Mammary epithelial cell (primary cell): ENCODE measurements at regions of chr20 and their contacts with region 1.

Region 1: GRCh38 chr20:17995967-17996819 is 27.4 kb downstream of the MGME1 start:
- DNase-seq: peak; percentile 55
- H3K4me3 ChIP-seq: no peak overlapping the region
- H3K27ac ChIP-seq: no peak overlapping the region
- H3K4me1 ChIP-seq: peaks cover 14% of the 10 kb centered on the region
- H3K27me3 ChIP-seq: no peaks in the 10 kb centered on the region
- CTCF ChIP-seq: peak; percentile 98 to 100

Region 2: GRCh38 chr20:16279320-16279719 is 1716.9 kb before region 1 on chr20:
- CTCF ChIA-PET with region 1: no interaction called
- dilution Hi-C with region 1: no loop called
- in situ Hi-C with region 1: no loop called
- intact Hi-C with region 1: no loop called
- DNase-seq: no peak
- H3K4me3 ChIP-seq: no peak overlapping the region
- H3K27ac ChIP-seq: no peak overlapping the region
- H3K4me1 ChIP-seq: no peaks in the 10 kb centered on the region
- H3K27me3 ChIP-seq: no peaks in the 10 kb centered on the region
- CTCF ChIP-seq: no peak

Region 3: GRCh38 chr20:17611540-17612286 is 384.5 kb before region 1 on chr20:
- CTCF ChIA-PET with region 1: no interaction called
- dilution Hi-C with region 1: no loop called
- in situ Hi-C with region 1: no loop called
- intact Hi-C with region 1: loop called (anchors 2 kb)
- DNase-seq: peak; percentile 70
- H3K4me3 ChIP-seq: no peak overlapping the region
- H3K27ac ChIP-seq: no peak overlapping the region
- H3K4me1 ChIP-seq: peaks cover 29% of the 10 kb centered on the region
- H3K27me3 ChIP-seq: no peaks in the 10 kb centered on the region
- CTCF ChIP-seq: peak in 1 of 2 donors; percentile 75

Region 4: GRCh38 chr20:17958373-17959256 is 37.6 kb before region 1 on chr20:
- CTCF ChIA-PET with region 1: interaction called, 9 read pairs
- dilution Hi-C with region 1: no loop called
- in situ Hi-C with region 1: no loop called
- intact Hi-C with region 1: loop called (anchors 2 kb)
- DNase-seq: no peak
- H3K4me3 ChIP-seq: no peak overlapping the region
- H3K27ac ChIP-seq: no peak overlapping the region
- H3K4me1 ChIP-seq: peaks cover 37% of the 10 kb centered on the region
- H3K27me3 ChIP-seq: no peaks in the 10 kb centered on the region
- CTCF ChIP-seq: no peak

Region 5: DNA sequence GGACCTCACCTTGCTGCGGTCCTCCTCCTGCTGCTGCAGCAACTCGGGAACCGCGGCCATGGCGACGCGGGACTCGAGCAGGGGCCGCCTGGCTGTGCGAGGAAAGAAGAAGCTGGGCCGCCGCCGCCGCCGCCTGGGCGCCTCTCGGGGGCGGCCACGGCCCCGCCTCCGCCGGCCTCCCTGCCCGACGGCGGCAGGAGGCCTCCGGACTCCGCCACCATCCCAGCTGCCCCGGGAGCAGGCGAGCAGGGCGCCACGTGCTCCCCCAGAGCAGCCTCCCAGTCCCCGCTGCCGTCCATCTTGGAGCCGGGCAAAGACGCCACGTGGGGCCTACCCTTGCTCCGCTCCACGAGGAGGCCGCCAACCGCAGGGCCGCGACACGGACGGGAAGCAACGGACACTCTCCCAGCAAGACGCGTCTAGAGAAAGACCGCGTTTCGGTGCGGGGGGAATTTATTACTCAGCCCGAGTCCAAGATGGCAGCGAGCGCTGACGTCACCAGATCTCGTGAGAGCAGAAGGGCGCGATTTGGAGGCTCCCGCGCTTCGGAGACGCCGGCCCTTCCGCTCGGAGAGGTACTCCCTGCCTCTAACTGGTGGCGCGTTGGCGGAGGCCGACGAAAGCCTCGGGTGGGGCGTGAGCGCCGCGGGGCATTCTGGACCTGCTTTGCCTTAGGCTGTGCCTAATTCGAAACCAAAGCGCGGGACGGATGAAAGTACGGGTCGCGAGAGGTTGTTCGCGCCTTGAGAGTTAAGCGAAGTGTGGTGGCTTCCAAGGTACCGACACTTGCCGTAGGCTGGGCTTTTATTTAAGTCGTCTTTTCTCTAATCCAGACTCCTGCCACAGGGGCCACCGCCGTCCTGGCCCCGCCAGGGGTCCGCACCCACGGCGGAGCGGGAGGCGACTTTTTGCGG is 27.6 kb before region 1 on chr20 and contains the starts of genes MGME1 and SNX5:
- CTCF ChIA-PET with region 1: no interaction called
- dilution Hi-C with region 1: no loop called
- in situ Hi-C with region 1: no loop called
- intact Hi-C with region 1: loop called (anchors 1 kb)
- DNase-seq: peak; percentile 99
- H3K4me3 ChIP-seq: peak within 1 kb of the TSS; percentile 88 to 93 (median 91)
- H3K27ac ChIP-seq: peak within 1 kb of the TSS; percentile 98
- H3K4me1 ChIP-seq: peaks cover 26% of the 10 kb centered on the region
- H3K27me3 ChIP-seq: no peaks in the 10 kb centered on the region
- CTCF ChIP-seq: no peak
- total RNA-seq, gene MGME1: 15.8 to 36.2 TPM
- total RNA-seq, gene SNX5: 68.0 to 137 TPM

Region 6: DNA sequence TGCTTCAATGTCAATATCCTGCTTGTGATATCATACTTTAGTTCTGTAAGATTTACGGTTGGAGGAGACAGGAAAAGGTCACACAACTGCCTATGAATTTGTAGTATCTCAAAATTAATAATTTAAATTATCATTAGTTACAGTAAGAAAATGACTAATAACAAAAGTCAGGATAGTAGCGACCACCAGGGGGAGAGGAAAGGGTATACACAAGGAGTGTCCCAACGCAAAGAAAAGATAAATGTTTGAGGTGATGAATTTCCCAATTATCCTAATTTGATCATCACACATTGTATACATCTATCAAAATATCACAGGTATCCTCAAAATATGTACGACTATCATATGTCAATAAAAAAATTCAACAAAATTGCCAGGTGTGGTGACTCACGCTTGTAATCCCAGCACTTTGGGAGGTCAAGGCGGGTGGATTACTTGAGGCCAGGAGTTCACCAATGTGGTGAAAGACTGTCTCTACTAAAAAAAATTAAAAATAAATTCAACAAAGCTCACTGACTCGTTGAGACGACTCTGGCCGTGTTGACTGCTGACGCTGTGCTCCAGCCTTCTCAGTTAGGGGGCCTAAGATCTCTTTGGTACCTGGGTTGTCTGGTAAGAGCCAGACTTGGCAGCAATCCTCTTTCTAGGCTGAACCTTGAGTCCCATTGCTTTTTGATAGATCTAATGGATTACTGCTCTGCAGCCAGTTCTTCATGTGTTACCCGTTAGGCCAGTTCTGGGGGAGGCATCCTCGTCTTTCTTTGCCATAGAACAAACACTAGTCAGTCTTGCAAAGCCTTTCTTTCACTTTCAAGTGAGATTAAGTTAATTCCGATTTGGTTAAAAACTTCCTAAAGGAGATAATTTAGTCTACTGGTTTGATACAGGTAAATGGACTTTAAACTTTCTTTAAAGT is 70.5 kb after region 1 on chr20:
- CTCF ChIA-PET with region 1: no interaction called
- dilution Hi-C with region 1: no loop called
- in situ Hi-C with region 1: no loop called
- intact Hi-C with region 1: no loop called
- DNase-seq: no peak
- H3K4me3 ChIP-seq: no peak overlapping the region
- H3K27ac ChIP-seq: no peak overlapping the region
- H3K4me1 ChIP-seq: no peaks in the 10 kb centered on the region
- H3K27me3 ChIP-seq: no peaks in the 10 kb centered on the region
- CTCF ChIP-seq: peak; percentile 15 to 23